Endothelial cell of umbilical vein (primary cell): ENCODE measurements at regions of chr12 and their contacts with region 1.

Region 1: GRCh38 chr12:125049093-125049458 is 16.2 kb upstream of the AACS start:
- DNase-seq: no peak
- H3K4me3 ChIP-seq: peak overlapping the region; percentile 59 to 90 (median 72)
- H3K27ac ChIP-seq: no peak overlapping the region
- H3K4me1 ChIP-seq: peaks cover 4% of the 10 kb centered on the region
- H3K27me3 ChIP-seq: no peaks in the 10 kb centered on the region
- CTCF ChIP-seq: no peak
- POLR2A ChIP-seq: no peak

Region 2: GRCh38 chr12:124992874-124993625 is 56.0 kb before region 1 on chr12:
- CTCF ChIA-PET with region 1: interaction called, 3 read pairs
- POLR2A ChIA-PET with region 1: no interaction called
- dilution Hi-C with region 1: no loop called
- intact Hi-C with region 1: loop called (anchors 5 kb)
- DNase-seq: peak; percentile 52
- H3K4me3 ChIP-seq: peak overlapping the region; percentile 54 to 79 (median 78)
- H3K27ac ChIP-seq: no peak overlapping the region
- H3K4me1 ChIP-seq: peaks cover 23% of the 10 kb centered on the region
- H3K27me3 ChIP-seq: no peaks in the 10 kb centered on the region
- CTCF ChIP-seq: peak in 1 of 2 donors; percentile 20
- POLR2A ChIP-seq: no peak

Region 3: GRCh38 chr12:125033320-125033687 is 15.8 kb before region 1 on chr12:
- CTCF ChIA-PET with region 1: no interaction called
- POLR2A ChIA-PET with region 1: no interaction called
- dilution Hi-C with region 1: no loop called
- intact Hi-C with region 1: no loop called
- DNase-seq: no peak
- H3K4me3 ChIP-seq: no peak overlapping the region
- H3K27ac ChIP-seq: no peak overlapping the region
- H3K4me1 ChIP-seq: no peaks in the 10 kb centered on the region
- H3K27me3 ChIP-seq: no peaks in the 10 kb centered on the region
- CTCF ChIP-seq: no peak
- POLR2A ChIP-seq: no peak

Region 4: GRCh38 chr12:125104982-125105381 is 55.9 kb after region 1 on chr12:
- CTCF ChIA-PET with region 1: no interaction called
- POLR2A ChIA-PET with region 1: no interaction called
- dilution Hi-C with region 1: no loop called
- intact Hi-C with region 1: no loop called
- DNase-seq: no peak
- H3K4me3 ChIP-seq: no peak overlapping the region
- H3K27ac ChIP-seq: no peak overlapping the region
- H3K4me1 ChIP-seq: no peaks in the 10 kb centered on the region
- H3K27me3 ChIP-seq: no peaks in the 10 kb centered on the region
- CTCF ChIP-seq: no peak
- POLR2A ChIP-seq: no peak

Region 5: DNA sequence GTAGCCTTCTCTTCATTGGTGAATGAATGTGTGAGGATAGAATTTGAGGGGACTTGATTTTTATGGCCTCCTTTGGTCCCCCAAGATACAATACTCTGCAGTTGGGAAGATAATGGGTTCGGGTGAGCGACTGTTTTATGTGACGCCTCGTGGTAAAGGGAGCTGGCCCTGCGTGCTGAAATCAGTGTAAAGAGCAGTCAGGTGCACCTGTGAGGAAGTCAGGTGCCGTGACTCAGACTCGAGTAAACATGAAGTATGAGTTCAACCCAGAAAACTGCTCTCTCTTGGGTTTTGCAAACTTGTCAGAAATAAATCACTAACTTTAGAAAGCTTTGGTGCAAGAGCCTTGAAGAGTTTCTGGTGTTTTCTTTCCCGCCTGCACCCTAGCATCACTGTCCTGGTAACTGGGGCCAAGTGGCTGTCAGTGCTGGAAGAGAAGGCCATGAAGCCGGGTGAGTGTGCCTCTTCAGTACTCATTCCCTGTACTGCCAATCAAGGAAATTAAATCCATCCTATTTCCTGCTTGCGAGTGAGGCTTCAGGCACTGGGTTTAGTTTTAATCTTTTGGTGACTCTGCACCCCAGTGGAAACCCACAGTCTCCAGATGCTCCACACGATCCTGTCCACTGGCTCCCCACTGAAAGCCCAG is 75.4 kb after region 1 on chr12:
- CTCF ChIA-PET with region 1: no interaction called
- POLR2A ChIA-PET with region 1: no interaction called
- dilution Hi-C with region 1: no loop called
- intact Hi-C with region 1: no loop called
- DNase-seq: no peak
- H3K4me3 ChIP-seq: no peak overlapping the region
- H3K27ac ChIP-seq: no peak overlapping the region
- H3K4me1 ChIP-seq: no peaks in the 10 kb centered on the region
- H3K27me3 ChIP-seq: no peaks in the 10 kb centered on the region
- CTCF ChIP-seq: no peak
- POLR2A ChIP-seq: no peak